PC-3 (cell line): ENCODE measurements at regions of chrX and their contacts with region 1.

Region 1: GRCh38 chrX:9464435-9465371 is at the start of gene TBL1X:
- DNase-seq: peak; percentile 67
- ATAC-seq: peak; percentile 44
- H3K4me3 ChIP-seq: peak within 1 kb of the TSS; percentile 86
- H3K27ac ChIP-seq: peak within 1 kb of the TSS; percentile 96
- H3K4me1 ChIP-seq: peaks cover 39% of the 10 kb centered on the region
- H3K27me3 ChIP-seq: no peaks in the 10 kb centered on the region
- CTCF ChIP-seq: no peak
- total RNA-seq, gene TBL1X: 31.9 and 51.6 TPM in 2 replicates

Region 2: GRCh38 chrX:8815464-8816065 is 649.1 kb before region 1 on chrX:
- CTCF ChIA-PET with region 1: no interaction called
- POLR2A ChIA-PET with region 1: no interaction called
- intact Hi-C with region 1: loop called (anchors 5 kb)
- DNase-seq: peak; percentile 82
- ATAC-seq: peak; percentile 64
- H3K4me3 ChIP-seq: no peak overlapping the region
- H3K27ac ChIP-seq: no peak overlapping the region
- H3K4me1 ChIP-seq: no peaks in the 10 kb centered on the region
- H3K27me3 ChIP-seq: no peaks in the 10 kb centered on the region
- CTCF ChIP-seq: peak; percentile 80

Region 3: GRCh38 chrX:8971116-8971515 is 493.6 kb before region 1 on chrX:
- CTCF ChIA-PET with region 1: no interaction called
- POLR2A ChIA-PET with region 1: no interaction called
- intact Hi-C with region 1: loop called (anchors 2 kb)
- DNase-seq: peak; percentile 79
- ATAC-seq: peak; percentile 90
- H3K4me3 ChIP-seq: no peak overlapping the region
- H3K27ac ChIP-seq: no peak overlapping the region
- H3K4me1 ChIP-seq: no peaks in the 10 kb centered on the region
- H3K27me3 ChIP-seq: no peaks in the 10 kb centered on the region
- CTCF ChIP-seq: peak; percentile 64

Region 4: GRCh38 chrX:9341291-9342201 is 123.2 kb before region 1 on chrX:
- CTCF ChIA-PET with region 1: no interaction called
- POLR2A ChIA-PET with region 1: no interaction called
- intact Hi-C with region 1: loop called (anchors 1 kb)
- DNase-seq: peak; percentile 59
- ATAC-seq: peak; percentile 47
- H3K4me3 ChIP-seq: peak overlapping the region; percentile 61
- H3K27ac ChIP-seq: peak overlapping the region; percentile 97
- H3K4me1 ChIP-seq: peaks cover 24% of the 10 kb centered on the region
- H3K27me3 ChIP-seq: no peaks in the 10 kb centered on the region
- CTCF ChIP-seq: peak; percentile 22; the same call in 1 of the 2 replicates

Region 5: GRCh38 chrX:9379697-9380551 is 84.8 kb before region 1 on chrX:
- CTCF ChIA-PET with region 1: no interaction called
- POLR2A ChIA-PET with region 1: no interaction called
- intact Hi-C with region 1: loop called (anchors 2 kb)
- DNase-seq: peak; percentile 89
- ATAC-seq: peak; percentile 89
- H3K4me3 ChIP-seq: peak overlapping the region; percentile 13; the same call in 1 of the 2 replicates
- H3K27ac ChIP-seq: peak overlapping the region; percentile 92
- H3K4me1 ChIP-seq: peaks cover 27% of the 10 kb centered on the region
- H3K27me3 ChIP-seq: no peaks in the 10 kb centered on the region
- CTCF ChIP-seq: no peak

Region 6: DNA sequence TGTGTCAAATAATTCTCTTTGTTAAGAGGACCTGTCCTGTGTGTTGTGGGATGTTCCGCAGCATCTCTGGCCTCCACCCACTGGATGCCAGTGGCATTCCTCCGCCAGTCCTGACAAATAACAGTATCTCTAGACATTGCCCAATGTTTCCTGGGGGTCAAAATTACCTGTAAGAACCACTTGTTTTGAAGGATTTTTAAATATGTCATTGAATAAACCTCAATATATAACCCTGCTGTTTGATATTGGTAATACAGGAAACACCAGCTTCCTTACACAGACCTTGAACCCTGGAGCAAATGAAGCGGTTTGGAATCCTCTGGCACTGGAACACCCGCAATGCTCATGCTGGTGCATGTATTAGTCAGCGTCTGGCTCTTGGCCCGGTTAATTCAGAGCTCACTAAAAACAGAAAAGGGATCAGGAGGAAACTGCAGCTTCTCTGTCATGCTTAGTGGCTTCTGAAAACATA is 101.5 kb after region 1 on chrX:
- CTCF ChIA-PET with region 1: no interaction called
- POLR2A ChIA-PET with region 1: no interaction called
- intact Hi-C with region 1: loop called (anchors 5 kb)
- DNase-seq: peak; percentile 92
- ATAC-seq: peak; percentile 88
- H3K4me3 ChIP-seq: 0 out of 2 replicates have a peak overlapping the region, but pooled peaks have one; percentile 10
- H3K27ac ChIP-seq: peak overlapping the region; percentile 14
- H3K4me1 ChIP-seq: peaks cover 28% of the 10 kb centered on the region
- H3K27me3 ChIP-seq: no peaks in the 10 kb centered on the region
- CTCF ChIP-seq: peak; percentile 33; the same call in 1 of the 2 replicates

Region 7: DNA sequence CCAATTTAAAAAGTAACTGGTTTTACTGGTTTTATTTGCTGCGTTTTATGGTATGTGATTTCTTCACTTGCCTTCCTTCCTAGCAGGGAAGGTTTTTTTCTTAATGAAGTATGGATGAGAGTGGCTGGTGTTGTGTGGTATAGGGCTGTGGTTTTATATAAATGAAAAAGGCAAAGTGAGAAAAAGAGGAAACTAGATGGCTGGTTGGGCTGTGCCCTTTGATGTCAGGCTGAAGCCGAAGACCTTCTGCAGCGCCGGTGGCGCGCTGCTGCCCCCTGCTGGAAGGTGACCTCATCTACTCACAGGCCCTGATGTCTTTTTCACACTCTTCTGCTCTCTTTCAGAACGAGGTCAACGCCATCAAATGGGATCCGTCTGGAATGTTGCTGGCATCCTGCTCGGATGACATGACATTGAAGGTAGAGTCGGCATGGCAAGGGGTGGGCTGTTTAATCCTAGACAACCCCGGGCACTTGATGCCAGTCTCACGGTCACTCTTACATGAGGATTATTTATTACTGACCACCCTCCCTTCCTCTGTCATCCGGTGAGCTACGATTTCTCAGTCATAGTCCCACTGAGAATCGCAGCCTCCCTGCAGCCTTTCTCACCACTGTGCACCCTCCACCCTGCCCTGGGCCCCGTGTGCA is 244.3 kb after region 1 on chrX:
- CTCF ChIA-PET with region 1: no interaction called
- POLR2A ChIA-PET with region 1: no interaction called
- intact Hi-C with region 1: loop called (anchors 10 kb)
- DNase-seq: peak; percentile 76
- ATAC-seq: peak; percentile 76
- H3K4me3 ChIP-seq: no peak overlapping the region
- H3K27ac ChIP-seq: 0 out of 2 replicates have a peak overlapping the region, but pooled peaks have one; percentile 20
- H3K4me1 ChIP-seq: peaks cover 11% of the 10 kb centered on the region
- H3K27me3 ChIP-seq: no peaks in the 10 kb centered on the region
- CTCF ChIP-seq: peak; percentile 85